ENCODE measurements at regions of chr1 and their contacts with region 1.

Region 1: DNA sequence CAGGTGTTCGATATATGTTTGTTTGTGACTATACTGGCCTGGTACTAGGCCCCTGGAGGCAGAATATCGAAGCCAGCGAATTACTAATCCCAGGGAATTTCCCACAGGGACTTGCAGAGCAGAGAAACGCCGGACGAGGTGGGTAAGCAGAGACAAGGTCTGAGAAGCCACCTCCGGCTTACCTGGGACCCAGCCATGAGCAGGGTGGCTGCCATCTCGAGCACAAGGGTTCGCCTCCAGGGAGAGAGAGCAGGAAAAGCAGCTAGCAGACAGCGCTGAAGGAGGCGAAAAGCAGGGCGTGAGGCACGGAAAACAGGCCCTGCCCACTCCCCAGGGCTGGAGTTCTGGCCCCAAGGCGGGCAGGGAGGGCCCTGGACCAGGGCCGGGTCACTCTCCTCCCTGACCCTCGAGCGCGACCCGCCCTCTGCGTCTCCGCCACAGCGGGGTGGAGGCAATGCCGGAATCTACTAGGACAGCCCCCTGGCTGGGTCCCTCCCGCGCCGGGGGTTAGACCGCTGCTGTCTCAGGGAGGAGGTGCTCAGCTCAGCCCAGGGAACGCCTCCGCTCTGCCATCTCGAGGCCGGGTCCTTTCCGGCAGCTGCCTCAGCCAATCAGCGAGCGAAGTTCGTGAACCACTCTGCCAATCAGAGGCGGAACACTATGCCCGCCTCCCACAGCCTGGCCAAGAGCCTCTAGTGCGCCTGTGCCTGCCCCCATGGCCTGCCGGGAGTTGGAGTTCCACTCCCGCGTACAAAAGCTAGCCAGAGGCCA is 1.7 kb downstream of the ZNF436 start:
- DNase-seq: peak; percentile 94 to 99 (median 96)
- ATAC-seq: peak; percentile 90
- H3K4me3 ChIP-seq: peak overlapping the region; percentile 71
- H3K4me3 Mint-ChIP-seq: peak overlapping the region; percentile 100
- H3K27ac ChIP-seq: peak overlapping the region; percentile 90 to 91
- H3K27ac Mint-ChIP-seq: peak overlapping the region; percentile 95
- H3K4me1 ChIP-seq: peaks cover 29% of the 10 kb centered on the region
- H3K4me1 Mint-ChIP-seq: peaks cover 43% of the 10 kb centered on the region
- H3K27me3 ChIP-seq: no peaks in the 10 kb centered on the region
- H3K27me3 Mint-ChIP-seq: no peaks in the 10 kb centered on the region
- CTCF ChIP-seq: no peak

Region 2: GRCh38 chr1:23344111-23344986 is 23.6 kb before region 1 on chr1 and contains the start of gene HNRNPR:
- CTCF ChIA-PET with region 1: interaction called, 11 read pairs
- POLR2A ChIA-PET with region 1: interaction called, 116 read pairs
- intact Hi-C with region 1: loop called (anchors 1 kb)
- DNase-seq: peak; percentile 96 to 100 (median 99)
- ATAC-seq: peak; percentile 96
- H3K4me3 ChIP-seq: peak within 1 kb of the TSS; percentile 73
- H3K4me3 Mint-ChIP-seq: peak within 1 kb of the TSS; percentile 96
- H3K27ac ChIP-seq: peak within 1 kb of the TSS; percentile 69 to 70
- H3K27ac Mint-ChIP-seq: peak within 1 kb of the TSS; percentile 92
- H3K4me1 ChIP-seq: peaks cover 8% of the 10 kb centered on the region
- H3K4me1 Mint-ChIP-seq: peaks cover 43% of the 10 kb centered on the region
- H3K27me3 ChIP-seq: no peaks in the 10 kb centered on the region
- H3K27me3 Mint-ChIP-seq: no peaks in the 10 kb centered on the region
- CTCF ChIP-seq: peak; percentile 11
- total RNA-seq, gene HNRNPR: 92.0 to 93.3 TPM

Region 3: GRCh38 chr1:23539698-23540266 is 171.8 kb after region 1 on chr1:
- CTCF ChIA-PET with region 1: no interaction called
- POLR2A ChIA-PET with region 1: interaction called, 3 read pairs
- intact Hi-C with region 1: loop called in 1 of 2 experiments (anchors 10 kb)
- DNase-seq: peak; percentile 86 to 96 (median 90)
- ATAC-seq: peak; percentile 96
- H3K4me3 ChIP-seq: no peak overlapping the region
- H3K4me3 Mint-ChIP-seq: peak overlapping the region; percentile 11
- H3K27ac ChIP-seq: no peak overlapping the region
- H3K27ac Mint-ChIP-seq: peak overlapping the region; percentile 50
- H3K4me1 ChIP-seq: peaks cover 17% of the 10 kb centered on the region
- H3K4me1 Mint-ChIP-seq: peaks cover 18% of the 10 kb centered on the region
- H3K27me3 ChIP-seq: no peaks in the 10 kb centered on the region
- H3K27me3 Mint-ChIP-seq: no peaks in the 10 kb centered on the region
- CTCF ChIP-seq: peak; percentile 94

Region 4: DNA sequence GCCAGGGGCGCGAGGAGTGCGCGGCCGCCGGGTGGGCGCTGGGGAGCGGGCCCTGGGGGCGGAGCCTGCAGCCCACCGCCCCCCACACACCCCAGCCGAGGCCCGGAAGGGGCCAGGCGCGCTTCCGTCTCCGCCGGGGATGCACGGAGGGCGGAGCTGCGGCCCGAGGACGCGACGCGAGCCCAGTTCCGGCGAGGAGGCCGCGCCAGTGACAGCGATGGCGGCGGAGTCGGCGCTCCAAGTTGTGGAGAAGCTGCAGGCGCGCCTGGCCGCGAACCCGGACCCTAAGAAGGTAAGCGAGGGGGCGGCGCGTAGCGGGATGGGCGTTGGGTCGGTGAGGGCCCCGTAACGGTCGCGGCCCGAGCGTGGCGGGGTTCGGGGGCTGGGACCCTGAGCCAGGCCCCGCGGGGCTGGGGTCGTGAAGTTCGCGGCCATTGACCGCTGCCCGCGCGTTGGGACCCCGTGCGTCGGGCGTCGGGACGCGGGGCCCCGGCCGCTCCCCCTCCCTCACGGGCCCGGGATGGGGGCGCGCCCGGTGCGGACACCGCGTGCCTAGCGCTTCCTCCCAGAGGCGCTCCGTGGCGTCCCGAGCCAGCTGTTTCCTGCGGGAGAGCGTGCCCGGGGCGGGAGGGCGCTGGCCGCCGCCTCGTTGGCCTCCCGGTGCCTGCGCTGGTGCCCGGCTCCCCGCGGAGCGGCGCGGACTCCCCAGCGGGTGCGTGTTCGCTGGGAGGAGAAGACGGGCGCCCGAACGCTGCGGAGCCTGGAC is 375.5 kb after region 1 on chr1 and contains the start of gene ELOA:
- CTCF ChIA-PET with region 1: no interaction called
- POLR2A ChIA-PET with region 1: no interaction called
- intact Hi-C with region 1: loop called in 1 of 2 experiments (anchors 2 kb)
- DNase-seq: peak; percentile 59 to 90 (median 74)
- ATAC-seq: peak; percentile 93
- H3K4me3 ChIP-seq: peak within 1 kb of the TSS; percentile 80
- H3K4me3 Mint-ChIP-seq: peak within 1 kb of the TSS; percentile 95
- H3K27ac ChIP-seq: peak within 1 kb of the TSS; percentile 79 to 90
- H3K27ac Mint-ChIP-seq: peak within 1 kb of the TSS; percentile 88
- H3K4me1 ChIP-seq: peaks cover 24% of the 10 kb centered on the region
- H3K4me1 Mint-ChIP-seq: peaks cover 54% of the 10 kb centered on the region
- H3K27me3 ChIP-seq: no peaks in the 10 kb centered on the region
- H3K27me3 Mint-ChIP-seq: no peaks in the 10 kb centered on the region
- CTCF ChIP-seq: no peak
- total RNA-seq, gene ELOA: 28.1 to 33.0 TPM

Region 5: DNA sequence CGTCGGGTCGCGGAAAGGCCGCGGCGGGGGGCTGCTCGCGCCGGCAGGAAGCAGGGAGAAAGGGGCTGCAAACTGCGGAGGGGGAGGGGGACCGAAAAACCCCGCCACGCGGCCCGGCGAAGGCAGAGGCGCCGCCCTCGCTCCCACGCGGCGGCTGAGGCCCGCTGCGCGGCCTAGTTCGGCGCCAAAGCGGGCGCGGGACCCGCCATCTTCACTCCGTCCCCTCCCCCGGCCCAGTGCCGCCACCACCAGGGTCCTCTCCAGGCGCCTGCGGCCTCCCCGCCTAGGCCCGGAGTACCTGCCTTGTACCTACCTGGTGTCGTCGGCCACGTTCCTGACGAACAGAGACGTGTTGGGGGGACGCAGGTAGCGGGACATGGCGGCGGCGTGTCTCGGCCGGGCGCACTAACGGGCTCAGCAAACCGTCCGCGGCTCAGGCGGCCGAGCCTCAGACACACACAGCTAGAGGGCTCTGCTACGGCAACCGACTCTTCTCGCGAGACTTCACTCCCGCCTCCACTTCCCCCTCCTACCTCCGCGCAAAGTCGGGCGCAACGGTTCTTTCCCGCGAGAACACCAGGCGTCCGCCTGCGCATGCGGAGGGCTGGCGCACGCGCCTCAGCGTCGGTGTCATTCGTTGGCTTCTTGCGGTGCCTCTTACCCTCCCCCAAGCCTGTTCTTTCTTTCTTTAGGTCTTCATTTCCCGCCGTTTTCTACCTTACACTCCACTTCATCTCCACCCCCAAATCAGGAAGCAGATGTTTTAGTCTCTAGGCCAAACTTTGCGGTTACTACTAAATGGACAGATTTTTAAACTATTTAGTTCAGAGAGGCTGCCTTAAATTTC is 612.1 kb after region 1 on chr1 and contains the start of gene SRSF10:
- CTCF ChIA-PET with region 1: no interaction called
- POLR2A ChIA-PET with region 1: interaction called, 3 read pairs
- intact Hi-C with region 1: loop called in 1 of 2 experiments (anchors 10 kb)
- DNase-seq: peak; percentile 93 to 100 (median 98)
- ATAC-seq: peak; percentile 95
- H3K4me3 ChIP-seq: peak within 1 kb of the TSS; percentile 92
- H3K4me3 Mint-ChIP-seq: peak within 1 kb of the TSS; percentile 99
- H3K27ac ChIP-seq: peak within 1 kb of the TSS; percentile 97 to 98
- H3K27ac Mint-ChIP-seq: peak within 1 kb of the TSS; percentile 95
- H3K4me1 ChIP-seq: peaks cover 19% of the 10 kb centered on the region
- H3K4me1 Mint-ChIP-seq: peaks cover 54% of the 10 kb centered on the region
- H3K27me3 ChIP-seq: no peaks in the 10 kb centered on the region
- H3K27me3 Mint-ChIP-seq: no peaks in the 10 kb centered on the region
- CTCF ChIP-seq: no peak
- total RNA-seq, gene SRSF10: 346 to 356 TPM